GM12878 (cell line): ENCODE measurements at regions of chr10 and their contacts with region 1.

Region 1: DNA sequence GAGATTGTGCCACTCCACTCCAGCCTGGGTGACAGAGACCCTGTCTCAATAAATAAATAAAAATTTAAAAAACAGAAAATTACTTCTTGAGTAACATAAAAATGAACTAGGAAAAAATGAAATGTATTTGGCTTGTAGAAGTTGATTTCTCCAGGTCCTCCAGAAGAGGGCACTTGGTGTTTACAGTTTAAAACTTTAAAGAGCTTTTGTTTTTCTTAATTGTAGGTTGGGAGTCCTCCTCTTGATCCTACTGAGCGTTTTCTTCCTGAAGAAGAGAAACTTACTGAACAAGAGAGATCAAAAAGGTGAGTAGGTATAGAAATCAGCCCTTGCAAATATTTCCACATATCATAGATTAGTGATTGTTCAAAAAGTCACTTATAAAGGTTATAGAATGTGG is 16.2 kb downstream of the KIFBP start:
- DNase-seq: no peak
- ATAC-seq: peak; percentile 85
- H3K4me3 ChIP-seq: no peak overlapping the region
- H3K27ac ChIP-seq: no peak overlapping the region
- H3K4me1 ChIP-seq: no peaks in the 10 kb centered on the region
- H3K27me3 ChIP-seq: no peaks in the 10 kb centered on the region
- CTCF ChIP-seq: peak; percentile 51 to 69 (median 56); a peak in 5 of 6 replicates
- EP300 ChIP-seq: no peak
- POLR2A ChIP-seq: no peak
- RAD21 ChIP-seq: peak; percentile 94

Region 2: GRCh38 chr10:68720793-68721672 is 283.8 kb before region 1 on chr10 and contains the start of gene CCAR1:
- CTCF ChIA-PET with region 1: no interaction called
- POLR2A ChIA-PET with region 1: no interaction called
- RAD21 ChIA-PET with region 1: no interaction called
- SMC1A ChIA-PET with region 1: no interaction called
- in situ Hi-C with region 1: no loop called
- intact Hi-C with region 1: no loop called
- DNase-seq: peak; percentile 96
- ATAC-seq: peak; percentile 99
- H3K4me3 ChIP-seq: peak within 1 kb of the TSS; percentile 83
- H3K27ac ChIP-seq: peak within 1 kb of the TSS; percentile 88
- H3K4me1 ChIP-seq: no peaks in the 10 kb centered on the region
- H3K27me3 ChIP-seq: no peaks in the 10 kb centered on the region
- CTCF ChIP-seq: no peak
- EP300 ChIP-seq: no peak
- POLR2A ChIP-seq: peak; percentile 86
- RAD21 ChIP-seq: no peak
- polyA plus RNA-seq, gene CCAR1: 35.5 to 48.8 TPM

Region 3: DNA sequence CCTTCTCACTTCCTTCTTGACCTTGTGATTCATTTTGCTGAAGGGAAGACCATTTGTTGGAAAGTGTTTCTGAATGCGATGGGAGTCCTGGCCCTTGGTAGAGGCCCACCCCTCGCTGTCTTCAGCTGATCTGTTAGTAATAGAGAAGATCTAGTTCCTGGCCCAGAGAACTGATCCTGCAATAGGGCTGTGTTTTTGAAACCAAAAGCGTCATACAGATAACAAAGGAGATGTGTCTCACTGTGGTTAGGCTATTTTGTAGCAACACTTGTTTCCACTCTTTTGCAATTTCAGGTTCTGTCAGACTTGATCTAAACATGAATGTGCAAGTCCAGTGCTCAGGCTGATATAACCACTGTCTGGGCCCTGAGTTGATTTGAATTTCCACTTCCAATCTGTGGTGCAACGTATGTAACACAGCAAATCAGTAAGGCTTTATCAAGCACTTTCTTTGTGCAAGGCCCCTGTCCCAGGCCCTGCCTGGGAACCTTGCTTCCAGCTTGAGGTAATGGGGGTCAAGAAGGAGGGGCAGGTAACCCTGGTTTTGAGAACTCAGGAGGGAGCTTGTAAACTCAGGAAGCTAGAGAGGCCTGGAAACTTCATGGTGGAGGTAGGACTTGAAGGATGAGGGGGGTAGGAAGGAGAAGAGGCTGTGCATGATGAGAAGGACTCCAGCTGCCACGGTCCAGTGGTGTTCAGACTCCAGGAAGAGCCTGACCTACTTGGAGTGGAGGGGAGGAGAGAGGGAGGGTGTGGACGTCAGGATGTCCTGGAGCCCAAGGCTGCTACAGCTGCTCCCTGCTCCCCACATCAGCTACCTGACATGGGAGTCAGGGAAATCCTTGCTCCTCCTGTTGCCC is 40.9 kb after region 1 on chr10:
- CTCF ChIA-PET with region 1: interaction called, 36 read pairs
- POLR2A ChIA-PET with region 1: interaction called, 13 read pairs
- RAD21 ChIA-PET with region 1: interaction called, 19 read pairs
- SMC1A ChIA-PET with region 1: interaction called, 30 read pairs
- in situ Hi-C with region 1: no loop called
- intact Hi-C with region 1: loop called (anchors 5 kb)
- DNase-seq: peak; percentile 93
- ATAC-seq: peak; percentile 81
- H3K4me3 ChIP-seq: peak overlapping the region; percentile 14; the same call in 1 of the 2 replicates
- H3K27ac ChIP-seq: peak overlapping the region; percentile 94
- H3K4me1 ChIP-seq: peaks cover 70% of the 10 kb centered on the region
- H3K27me3 ChIP-seq: no peaks in the 10 kb centered on the region
- CTCF ChIP-seq: no peak
- EP300 ChIP-seq: peak; percentile 78 to 84; a peak in 3 of 4 replicates
- POLR2A ChIP-seq: peak; percentile 52; the same call in 1 of the 2 replicates
- RAD21 ChIP-seq: no peak; the same call in 1 of the 2 replicates

Region 4: GRCh38 chr10:69087590-69088470 is 83.0 kb after region 1 on chr10 and contains the start of gene SRGN:
- CTCF ChIA-PET with region 1: interaction called, 272 read pairs
- POLR2A ChIA-PET with region 1: interaction called, 25 read pairs
- RAD21 ChIA-PET with region 1: interaction called, 252 read pairs
- SMC1A ChIA-PET with region 1: interaction called, 269 read pairs
- in situ Hi-C with region 1: loop called (anchors 10 kb)
- intact Hi-C with region 1: loop called (anchors 1 kb)
- DNase-seq: peak; percentile 97
- ATAC-seq: peak; percentile 65
- H3K4me3 ChIP-seq: peak within 1 kb of the TSS; percentile 73
- H3K27ac ChIP-seq: peak within 1 kb of the TSS; percentile 97
- H3K4me1 ChIP-seq: peaks cover 18% of the 10 kb centered on the region
- H3K27me3 ChIP-seq: no peaks in the 10 kb centered on the region
- CTCF ChIP-seq: no peak
- EP300 ChIP-seq: peak; percentile 77 to 87; a peak in 3 of 4 replicates
- POLR2A ChIP-seq: peak; percentile 96
- RAD21 ChIP-seq: no peak
- polyA plus RNA-seq, gene SRGN: 1,115 to 1,176 TPM

Region 5: GRCh38 chr10:69107699-69108098 is 102.9 kb after region 1 on chr10:
- CTCF ChIA-PET with region 1: interaction called, 23 read pairs
- POLR2A ChIA-PET with region 1: interaction called, 3 read pairs
- RAD21 ChIA-PET with region 1: interaction called, 22 read pairs
- SMC1A ChIA-PET with region 1: interaction called, 57 read pairs
- in situ Hi-C with region 1: no loop called
- intact Hi-C with region 1: no loop called
- DNase-seq: no peak
- ATAC-seq: no peak
- H3K4me3 ChIP-seq: no peak overlapping the region
- H3K27ac ChIP-seq: no peak overlapping the region
- H3K4me1 ChIP-seq: no peaks in the 10 kb centered on the region
- H3K27me3 ChIP-seq: no peaks in the 10 kb centered on the region
- CTCF ChIP-seq: no peak
- EP300 ChIP-seq: no peak
- POLR2A ChIP-seq: no peak
- RAD21 ChIP-seq: no peak

Region 6: GRCh38 chr10:69172241-69172982 is 167.6 kb after region 1 on chr10:
- CTCF ChIA-PET with region 1: interaction called, 3 read pairs
- POLR2A ChIA-PET with region 1: interaction called, 5 read pairs
- RAD21 ChIA-PET with region 1: interaction called, 8 read pairs
- SMC1A ChIA-PET with region 1: interaction called, 13 read pairs
- in situ Hi-C with region 1: no loop called
- intact Hi-C with region 1: no loop called
- DNase-seq: no peak
- ATAC-seq: peak; percentile 62
- H3K4me3 ChIP-seq: peak overlapping the region; percentile 9; the same call in 1 of the 2 replicates
- H3K27ac ChIP-seq: peak overlapping the region; percentile 16; the same call in 1 of the 2 replicates
- H3K4me1 ChIP-seq: peaks cover 6% of the 10 kb centered on the region; the same call in 1 of the 2 replicates
- H3K27me3 ChIP-seq: no peaks in the 10 kb centered on the region
- CTCF ChIP-seq: no peak
- EP300 ChIP-seq: no peak
- POLR2A ChIP-seq: no peak
- RAD21 ChIP-seq: no peak

Region 7: DNA sequence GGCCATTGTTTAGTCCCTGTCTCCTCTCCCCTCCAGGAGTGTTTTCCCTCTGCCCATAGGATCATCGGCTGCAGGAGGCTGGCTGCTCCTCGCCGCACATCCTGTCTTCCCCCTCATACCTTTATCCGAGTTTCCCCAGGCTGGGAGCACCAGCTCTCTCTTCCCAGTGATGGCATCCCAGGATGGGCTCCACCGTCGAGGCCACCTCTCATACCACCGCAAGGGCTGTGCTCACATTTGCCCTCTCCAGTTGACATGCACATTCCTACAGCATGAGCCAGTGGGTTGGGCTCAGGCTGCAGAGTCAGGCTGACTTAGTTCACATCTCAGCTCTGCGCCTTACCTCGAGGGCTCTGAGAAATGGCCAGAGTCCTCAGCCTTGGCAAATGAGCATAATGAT is 227.4 kb after region 1 on chr10:
- CTCF ChIA-PET with region 1: interaction called, 25 read pairs
- POLR2A ChIA-PET with region 1: no interaction called
- RAD21 ChIA-PET with region 1: interaction called, 10 read pairs
- SMC1A ChIA-PET with region 1: interaction called, 13 read pairs
- in situ Hi-C with region 1: no loop called
- intact Hi-C with region 1: no loop called
- DNase-seq: no peak
- ATAC-seq: no peak
- H3K4me3 ChIP-seq: no peak overlapping the region
- H3K27ac ChIP-seq: no peak overlapping the region
- H3K4me1 ChIP-seq: peaks cover 21% of the 10 kb centered on the region
- H3K27me3 ChIP-seq: no peaks in the 10 kb centered on the region
- CTCF ChIP-seq: no peak
- EP300 ChIP-seq: no peak
- POLR2A ChIP-seq: no peak
- RAD21 ChIP-seq: no peak

Region 8: DNA sequence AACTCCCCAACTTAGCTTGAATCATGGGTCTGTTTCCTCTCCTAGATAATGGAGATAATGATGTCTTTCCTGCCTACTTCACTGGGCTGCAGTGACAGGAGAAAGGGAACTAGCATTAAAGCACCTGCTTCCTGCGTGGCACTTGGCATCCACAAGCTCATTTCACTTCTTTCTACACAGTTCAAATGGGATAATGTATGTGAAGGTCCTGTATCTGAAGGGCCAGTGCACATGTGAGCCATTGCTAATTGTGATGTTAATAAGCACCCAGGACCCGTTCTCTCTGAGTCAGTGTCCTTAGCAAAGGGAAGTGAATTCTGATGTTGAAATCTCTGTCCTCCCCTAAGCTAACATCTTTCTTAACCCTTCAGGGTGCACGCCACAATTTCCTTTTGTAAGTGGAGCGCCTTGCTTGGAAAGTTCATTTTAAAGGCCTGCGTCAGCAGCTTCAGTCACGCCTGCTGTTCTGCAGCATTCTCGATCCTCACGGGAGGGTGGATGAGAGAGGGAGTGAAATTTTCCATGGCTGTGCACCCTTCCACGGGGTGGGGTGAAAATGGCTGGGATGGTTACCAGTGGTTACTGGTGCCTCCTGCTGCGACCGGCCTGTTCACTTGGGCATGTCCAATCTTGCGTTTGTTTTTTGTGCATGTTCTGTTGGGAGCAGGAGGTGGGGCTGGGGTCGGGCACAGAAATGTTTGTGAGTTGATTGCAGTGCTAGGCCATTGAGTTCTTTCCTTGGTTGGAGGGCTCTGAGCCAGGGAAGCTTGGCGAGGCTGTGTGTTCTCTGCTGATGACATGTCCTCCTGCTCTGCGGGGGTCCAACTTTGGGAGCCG is 332.7 kb after region 1 on chr10:
- CTCF ChIA-PET with region 1: no interaction called
- POLR2A ChIA-PET with region 1: no interaction called
- RAD21 ChIA-PET with region 1: no interaction called
- SMC1A ChIA-PET with region 1: no interaction called
- in situ Hi-C with region 1: no loop called
- intact Hi-C with region 1: no loop called
- DNase-seq: no peak
- ATAC-seq: no peak
- H3K4me3 ChIP-seq: no peak overlapping the region
- H3K27ac ChIP-seq: no peak overlapping the region
- H3K4me1 ChIP-seq: peaks cover 15% of the 10 kb centered on the region
- H3K27me3 ChIP-seq: no peaks in the 10 kb centered on the region
- CTCF ChIP-seq: no peak
- EP300 ChIP-seq: no peak
- POLR2A ChIP-seq: no peak
- RAD21 ChIP-seq: no peak

Region 9: DNA sequence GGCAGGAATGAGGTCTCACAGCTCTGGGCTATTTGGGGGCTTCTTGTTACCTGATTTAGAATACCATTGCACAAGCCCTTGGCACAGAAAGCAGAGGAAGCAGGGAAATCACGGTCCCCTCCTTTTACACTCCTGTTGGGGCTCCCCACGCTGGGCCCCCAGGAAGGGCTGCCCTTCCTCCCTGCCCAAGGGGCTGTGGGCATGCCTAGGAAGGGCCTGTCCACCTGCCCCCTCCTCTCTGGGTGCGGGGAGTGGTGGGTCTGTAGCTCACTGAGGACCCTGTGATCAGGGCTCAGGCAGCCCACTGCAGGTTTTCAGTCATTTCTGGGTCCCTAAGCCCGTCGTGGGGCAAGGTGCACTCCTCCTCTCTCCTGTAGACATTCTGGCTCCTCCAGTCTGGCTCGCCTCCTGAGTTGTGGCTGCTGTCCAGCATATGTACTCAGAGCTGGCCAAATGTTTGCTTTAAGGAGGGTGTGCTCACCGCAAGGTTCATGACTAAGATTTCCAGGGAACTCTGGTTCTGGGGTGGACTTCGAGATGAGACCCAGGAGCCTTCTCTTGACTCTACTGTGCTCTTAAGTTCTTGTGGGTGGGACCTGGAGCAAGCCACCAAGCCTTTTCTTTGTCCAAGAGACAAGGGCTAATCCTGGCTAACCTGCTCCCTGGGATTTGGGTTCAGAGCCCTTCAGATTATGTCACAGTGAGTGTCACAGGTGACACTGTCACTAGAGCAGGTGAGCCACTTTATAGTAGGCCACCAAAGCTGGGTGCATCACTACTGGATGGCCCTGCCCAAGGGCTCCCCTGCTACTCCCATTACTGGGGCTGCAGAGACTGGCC is 355.9 kb after region 1 on chr10:
- CTCF ChIA-PET with region 1: no interaction called
- POLR2A ChIA-PET with region 1: no interaction called
- RAD21 ChIA-PET with region 1: no interaction called
- SMC1A ChIA-PET with region 1: no interaction called
- in situ Hi-C with region 1: no loop called
- intact Hi-C with region 1: no loop called
- DNase-seq: no peak
- ATAC-seq: no peak
- H3K4me3 ChIP-seq: no peak overlapping the region
- H3K27ac ChIP-seq: no peak overlapping the region
- H3K4me1 ChIP-seq: no peaks in the 10 kb centered on the region
- H3K27me3 ChIP-seq: no peaks in the 10 kb centered on the region
- CTCF ChIP-seq: no peak
- EP300 ChIP-seq: no peak
- POLR2A ChIP-seq: no peak
- RAD21 ChIP-seq: no peak

Region 10: GRCh38 chr10:69486922-69487666 is 482.3 kb after region 1 on chr10:
- CTCF ChIA-PET with region 1: no interaction called
- POLR2A ChIA-PET with region 1: no interaction called
- RAD21 ChIA-PET with region 1: no interaction called
- SMC1A ChIA-PET with region 1: no interaction called
- in situ Hi-C with region 1: no loop called
- intact Hi-C with region 1: no loop called
- DNase-seq: no peak
- ATAC-seq: no peak
- H3K4me3 ChIP-seq: no peak overlapping the region
- H3K27ac ChIP-seq: no peak overlapping the region
- H3K4me1 ChIP-seq: no peaks in the 10 kb centered on the region
- H3K27me3 ChIP-seq: no peaks in the 10 kb centered on the region
- CTCF ChIP-seq: no peak
- EP300 ChIP-seq: no peak
- POLR2A ChIP-seq: no peak
- RAD21 ChIP-seq: no peak